T-cell (primary cell): ENCODE measurements at regions of chr5 and their contacts with region 1.

Region 1: DNA sequence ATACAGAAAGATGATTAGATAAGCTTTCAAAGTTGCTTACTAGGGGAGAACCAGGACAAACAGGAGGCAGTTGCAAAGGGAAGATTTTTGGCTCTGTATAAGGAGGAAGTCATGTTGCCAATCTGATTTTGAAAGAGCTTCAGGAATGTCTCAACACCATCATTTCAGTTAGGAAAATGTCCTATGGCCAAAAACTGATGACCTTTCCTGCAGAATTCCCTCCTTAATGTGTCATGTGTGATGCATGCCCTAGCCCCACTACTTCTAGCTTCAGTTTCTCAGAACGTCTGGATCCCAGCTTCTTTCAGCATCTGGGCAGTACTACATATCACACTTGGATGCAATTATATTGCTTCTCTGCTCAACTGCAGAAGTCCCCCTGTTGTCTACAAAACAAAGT is 211.5 kb upstream of the NREP start:
- DNase-seq: no peak
- ATAC-seq: no peak
- H3K4me3 ChIP-seq: no peak overlapping the region
- H3K4me3 Mint-ChIP-seq: no peak overlapping the region
- H3K27ac ChIP-seq: no peak overlapping the region
- H3K27ac Mint-ChIP-seq: no peak overlapping the region
- H3K4me1 ChIP-seq: no peaks in the 10 kb centered on the region
- H3K4me1 Mint-ChIP-seq: no peaks in the 10 kb centered on the region
- H3K27me3 ChIP-seq: no peaks in the 10 kb centered on the region
- H3K27me3 Mint-ChIP-seq: peaks cover 0 to 4% of the 10 kb centered on the region in 2 donors

Region 2: GRCh38 chr5:110507972-110508371 is 1460.5 kb before region 1 on chr5:
- CTCF ChIA-PET with region 1: interaction called in 1 of 2 experiments, 11 read pairs
- POLR2A ChIA-PET with region 1: no interaction called
- DNase-seq: no peak
- ATAC-seq: no peak
- H3K4me3 ChIP-seq: no peak overlapping the region
- H3K4me3 Mint-ChIP-seq: no peak overlapping the region
- H3K27ac ChIP-seq: no peak overlapping the region
- H3K27ac Mint-ChIP-seq: no peak overlapping the region
- H3K4me1 ChIP-seq: no peaks in the 10 kb centered on the region
- H3K4me1 Mint-ChIP-seq: no peaks in the 10 kb centered on the region
- H3K27me3 ChIP-seq: no peaks in the 10 kb centered on the region
- H3K27me3 Mint-ChIP-seq: peaks cover 0 to 11% of the 10 kb centered on the region in 2 donors